Posterior cingulate gyrus (tissue), 11 donors: ENCODE measurements at regions of chr14 and their contacts with region 1.

Region 1: DNA sequence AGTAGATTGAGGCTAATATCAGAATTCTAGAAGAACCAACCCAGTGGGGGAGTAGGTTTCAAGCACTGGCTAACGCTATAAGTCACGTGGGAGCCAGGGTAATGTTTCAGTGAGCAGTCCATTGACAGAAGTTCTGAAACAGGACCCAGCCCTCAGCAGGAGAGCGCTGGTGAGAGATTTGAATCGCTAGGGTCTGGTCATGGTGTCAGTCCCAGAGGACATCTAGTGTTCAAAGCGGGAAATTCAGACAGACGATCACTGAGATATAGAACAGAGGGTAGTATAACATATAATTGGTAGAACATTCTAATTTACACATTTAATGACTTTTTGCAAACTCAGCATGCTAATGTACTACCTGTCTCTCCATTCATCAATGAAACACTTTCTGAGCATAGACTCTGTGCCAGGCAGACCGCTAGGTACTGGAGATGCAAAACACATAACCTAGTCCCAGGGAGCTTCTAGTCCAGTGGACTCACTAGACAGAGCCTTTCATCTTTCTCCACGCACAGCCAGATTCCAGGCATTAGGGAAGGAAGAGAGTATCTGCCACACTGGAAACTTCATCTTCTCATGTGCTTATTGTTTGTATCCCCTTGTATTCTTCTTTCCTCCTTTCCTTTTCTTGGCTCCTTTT is 35.4 kb upstream of the RNASE3 start:
- DNase-seq: peak in 7 of 10 donors; percentile 32 to 91 (median 51)

Region 2: GRCh38 chr14:20697273-20698017 is 158.3 kb before region 1 on chr14:
- intact Hi-C with region 1: loop called (anchors 1 kb)
- DNase-seq: peak in 7 of 10 donors; percentile 66 to 95 (median 77)

Region 3: DNA sequence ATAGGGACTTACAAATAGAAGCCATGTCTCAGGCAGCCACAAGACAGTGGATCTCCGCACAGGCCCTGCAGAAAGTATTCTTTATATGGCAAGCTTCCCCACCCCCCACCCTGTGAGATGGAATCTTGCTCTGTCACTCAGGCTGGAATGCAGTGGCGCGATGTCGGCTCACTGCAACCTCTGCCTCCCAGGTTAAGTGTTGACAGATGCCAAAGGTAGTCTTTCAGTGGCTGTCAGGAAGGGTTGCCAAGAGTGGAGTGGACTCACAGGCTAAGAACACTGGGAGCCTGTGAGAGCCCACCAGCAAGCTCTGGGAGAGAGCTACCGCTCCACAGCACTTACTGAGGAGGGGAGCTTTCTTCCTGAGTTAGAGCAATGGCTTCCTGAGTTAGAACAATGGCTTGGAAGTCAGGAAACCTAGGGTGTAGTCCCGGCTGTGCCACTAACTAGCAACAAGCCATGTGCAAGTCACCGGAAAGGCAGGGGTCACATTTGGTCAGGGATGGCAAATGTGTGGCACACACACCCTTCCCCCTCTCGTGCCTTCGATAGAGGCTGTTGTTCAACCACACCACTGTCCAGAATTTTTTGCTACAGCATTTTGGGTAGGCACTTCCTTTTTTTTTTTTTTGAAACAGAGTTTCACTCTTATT is 55.8 kb before region 1 on chr14:
- intact Hi-C with region 1: loop called (anchors 5 kb)
- DNase-seq: peak in 1 of 10 donors; percentile 46

Region 4: GRCh38 chr14:20873370-20874177 is 17.8 kb after region 1 on chr14:
- intact Hi-C with region 1: loop called (anchors 2 kb)
- DNase-seq: peak; percentile 47 to 96 (median 80)